B cell (primary cell): ENCODE measurements at regions of chr11 and their contacts with region 1.

Region 1: GRCh38 chr11:7986768-7987559 is at the start of gene EIF3F:
- DNase-seq: peak; percentile 98
- ATAC-seq: peak; percentile 97
- H3K4me3 ChIP-seq: peak within 1 kb of the TSS; percentile 58 to 83 (median 63)
- H3K4me3 Mint-ChIP-seq: peak within 1 kb of the TSS; percentile 93
- H3K27ac ChIP-seq: peak within 1 kb of the TSS; percentile 56 to 86
- H3K27ac Mint-ChIP-seq: peak within 1 kb of the TSS; percentile 94
- H3K4me1 ChIP-seq: peaks cover 24 to 26% of the 10 kb centered on the region in 2 donors
- H3K4me1 Mint-ChIP-seq: peaks cover 37% of the 10 kb centered on the region
- H3K27me3 ChIP-seq: no peaks in the 10 kb centered on the region
- H3K27me3 Mint-ChIP-seq: no peaks in the 10 kb centered on the region
- CTCF ChIP-seq: peak; percentile 85
- total RNA-seq, gene EIF3F: 316 and 330 TPM in 2 replicates

Region 2: GRCh38 chr11:7892840-7893254 is 94.1 kb before region 1 on chr11:
- CTCF ChIA-PET with region 1: interaction called, 15 read pairs
- POLR2A ChIA-PET with region 1: no interaction called
- intact Hi-C with region 1: loop called (anchors 1 kb)
- DNase-seq: peak; percentile 52
- ATAC-seq: peak; percentile 56
- H3K4me3 ChIP-seq: no peak overlapping the region
- H3K4me3 Mint-ChIP-seq: no peak overlapping the region
- H3K27ac ChIP-seq: no peak overlapping the region
- H3K27ac Mint-ChIP-seq: no peak overlapping the region
- H3K4me1 ChIP-seq: peaks cover 20 to 25% of the 10 kb centered on the region in 2 donors
- H3K4me1 Mint-ChIP-seq: peaks cover 28% of the 10 kb centered on the region
- H3K27me3 ChIP-seq: no peaks in the 10 kb centered on the region
- H3K27me3 Mint-ChIP-seq: peaks cover 4% of the 10 kb centered on the region
- CTCF ChIP-seq: peak; percentile 75

Region 3: DNA sequence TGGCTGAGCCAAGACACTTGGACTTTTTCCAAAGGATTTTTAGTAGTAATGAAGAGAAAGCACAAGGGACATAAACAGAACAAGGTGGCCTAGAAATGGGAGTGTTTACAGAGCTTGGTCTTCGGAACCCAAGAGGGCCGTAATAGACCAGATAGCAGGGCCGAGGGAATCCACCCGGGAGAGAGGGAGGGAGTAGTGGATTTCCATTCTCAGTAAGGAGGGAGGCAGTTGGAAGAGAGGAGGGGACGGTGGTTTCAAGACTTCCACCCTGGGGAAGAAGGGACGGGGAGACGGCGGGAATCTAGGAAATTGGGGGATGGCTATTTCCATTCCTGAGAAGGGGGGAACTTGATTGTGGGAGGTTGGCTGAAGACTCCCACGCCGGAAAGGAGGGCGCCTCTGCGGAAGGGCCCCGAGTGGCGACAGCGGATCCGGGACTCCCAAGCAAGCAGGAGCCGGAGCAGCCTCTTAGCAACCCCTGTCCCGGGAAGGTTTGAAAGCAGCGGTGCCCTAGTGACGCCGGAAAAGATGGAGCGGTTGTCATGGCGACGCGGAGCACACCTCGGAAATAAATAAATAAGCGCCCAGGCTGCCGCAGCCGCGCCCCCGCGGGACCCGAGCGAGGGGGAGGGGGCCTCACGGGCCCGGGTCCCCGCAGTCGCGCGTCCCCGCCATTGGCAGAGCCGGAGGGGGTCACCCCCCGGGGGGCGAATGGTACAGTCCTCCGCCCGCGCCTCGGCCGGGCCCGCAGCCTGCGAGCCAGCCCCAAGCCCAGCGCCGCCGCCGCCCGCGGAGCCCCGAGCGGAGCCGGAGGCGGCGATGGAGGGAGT is 31.7 kb after region 1 on chr11:
- CTCF ChIA-PET with region 1: interaction called, 3 read pairs
- POLR2A ChIA-PET with region 1: no interaction called
- intact Hi-C with region 1: loop called (anchors 2 kb)
- DNase-seq: peak; percentile 89
- ATAC-seq: peak; percentile 63
- H3K4me3 ChIP-seq: peak overlapping the region in 4 of 5 experiments; percentile 31 to 69 (median 60)
- H3K4me3 Mint-ChIP-seq: peak overlapping the region; percentile 85
- H3K27ac ChIP-seq: peak overlapping the region in 1 of 2 donors; percentile 33
- H3K27ac Mint-ChIP-seq: no peak overlapping the region
- H3K4me1 ChIP-seq: peaks cover 16 to 18% of the 10 kb centered on the region in 2 donors
- H3K4me1 Mint-ChIP-seq: peaks cover 14% of the 10 kb centered on the region
- H3K27me3 ChIP-seq: peaks cover 0 to 63% (median 37%) of the 10 kb centered on the region in 4 experiments
- H3K27me3 Mint-ChIP-seq: peaks cover 45% of the 10 kb centered on the region
- CTCF ChIP-seq: no peak